ENCODE measurements at regions of chr5 and their contacts with region 1.

Region 1: DNA sequence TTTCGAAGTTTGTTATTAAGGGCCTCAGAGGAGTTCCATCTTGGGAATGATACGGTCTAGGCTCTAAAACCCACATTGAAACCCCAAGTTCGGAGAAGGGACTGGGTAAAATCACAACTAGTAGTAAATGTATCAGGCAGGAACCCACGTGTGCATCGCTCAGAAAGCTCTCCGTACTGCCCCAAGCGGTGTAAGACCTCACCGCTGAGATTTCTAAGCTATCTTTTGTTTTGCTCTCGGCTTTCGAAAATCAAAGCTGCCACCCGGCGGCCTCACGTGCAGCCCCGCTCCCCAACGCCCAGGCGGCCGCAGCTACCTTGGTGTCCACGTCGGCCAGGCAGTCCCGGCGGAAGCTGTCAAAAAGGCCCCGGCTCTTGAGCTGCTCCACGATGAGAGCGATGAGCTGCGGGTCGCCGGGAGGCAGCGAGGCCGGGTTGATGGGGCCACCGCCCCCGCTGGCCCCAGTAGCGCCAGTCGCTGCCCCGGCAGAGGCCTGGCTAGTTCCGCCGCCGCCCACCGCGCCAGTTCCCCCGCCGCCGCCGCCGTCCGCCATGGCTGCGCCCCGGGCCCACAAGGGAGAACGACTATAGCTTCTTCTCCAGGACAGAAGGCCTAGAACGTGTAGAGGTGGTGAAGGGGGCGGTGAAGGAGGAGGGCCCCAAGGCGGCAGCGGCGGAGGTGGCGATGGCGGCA is 420 bp downstream of the BOD1 start:
- DNase-seq: peak; percentile 93
- H3K4me3 ChIP-seq: peak overlapping the region; percentile 86 to 99 (median 94)
- H3K27ac ChIP-seq: peak overlapping the region; percentile 90 to 97 (median 94)
- H3K4me1 ChIP-seq: peaks cover 24 to 75% (median 42%) of the 10 kb centered on the region in 6 donors
- H3K27me3 ChIP-seq: no peaks in the 10 kb centered on the region
- CTCF ChIP-seq: peak; percentile 13 to 76 (median 63)
- POLR2A ChIP-seq: no peak

Region 2: GRCh38 chr5:173972925-173973615 is 357.0 kb after region 1 on chr5:
- intact Hi-C with region 1: loop called (anchors 2 kb)
- DNase-seq: peak; percentile 89
- H3K4me3 ChIP-seq: peak overlapping the region in 7 of 8 donors; percentile 21 to 68 (median 37)
- H3K27ac ChIP-seq: no peak overlapping the region
- H3K4me1 ChIP-seq: peaks cover 3 to 17% (median 13%) of the 10 kb centered on the region in 6 donors
- H3K27me3 ChIP-seq: peaks cover 0 to 12% (median 0%) of the 10 kb centered on the region in 7 donors
- CTCF ChIP-seq: peak; percentile 78 to 96 (median 93)
- POLR2A ChIP-seq: no peak

Region 3: GRCh38 chr5:174311531-174312269 is 695.7 kb after region 1 on chr5:
- intact Hi-C with region 1: loop called (anchors 5 kb)
- DNase-seq: peak; percentile 86
- H3K4me3 ChIP-seq: peak overlapping the region in 6 of 8 donors; percentile 5 to 62 (median 28)
- H3K27ac ChIP-seq: no peak overlapping the region
- H3K4me1 ChIP-seq: peaks cover 0 to 12% (median 9%) of the 10 kb centered on the region in 6 donors
- H3K27me3 ChIP-seq: peaks cover 0 to 93% (median 19%) of the 10 kb centered on the region in 7 donors
- CTCF ChIP-seq: peak in 10 of 11 experiments; percentile 30 to 86 (median 76)
- POLR2A ChIP-seq: no peak

Measured in spleen (tissue), 13 donors.